Lower leg skin (tissue), 4 donors: ENCODE measurements at regions of chr18 and their contacts with region 1.

Region 1: DNA sequence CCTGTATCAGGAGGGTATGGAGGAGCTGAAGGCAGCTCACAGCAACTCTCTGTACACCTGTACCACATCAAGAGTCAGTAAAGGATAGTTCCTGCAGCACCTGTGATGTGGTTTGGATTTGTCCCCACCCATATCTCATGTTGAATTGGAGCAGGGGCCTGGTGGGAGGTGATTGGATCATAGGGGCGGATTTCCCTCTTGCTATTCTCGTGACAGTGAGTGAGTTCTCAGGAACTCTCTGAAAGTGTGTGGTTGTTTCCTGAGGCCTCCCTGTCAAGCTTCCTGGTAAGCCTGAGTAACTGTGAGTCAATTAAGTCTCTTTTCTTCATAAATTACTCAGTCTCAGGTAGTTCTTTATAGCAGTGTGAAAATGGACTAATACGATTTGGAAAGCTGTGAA is 28.9 kb downstream of the OSBPL1A start:
- DNase-seq: no peak
- H3K4me3 ChIP-seq: no peak overlapping the region
- CTCF ChIP-seq: no peak
- POLR2A ChIP-seq: no peak

Region 2: DNA sequence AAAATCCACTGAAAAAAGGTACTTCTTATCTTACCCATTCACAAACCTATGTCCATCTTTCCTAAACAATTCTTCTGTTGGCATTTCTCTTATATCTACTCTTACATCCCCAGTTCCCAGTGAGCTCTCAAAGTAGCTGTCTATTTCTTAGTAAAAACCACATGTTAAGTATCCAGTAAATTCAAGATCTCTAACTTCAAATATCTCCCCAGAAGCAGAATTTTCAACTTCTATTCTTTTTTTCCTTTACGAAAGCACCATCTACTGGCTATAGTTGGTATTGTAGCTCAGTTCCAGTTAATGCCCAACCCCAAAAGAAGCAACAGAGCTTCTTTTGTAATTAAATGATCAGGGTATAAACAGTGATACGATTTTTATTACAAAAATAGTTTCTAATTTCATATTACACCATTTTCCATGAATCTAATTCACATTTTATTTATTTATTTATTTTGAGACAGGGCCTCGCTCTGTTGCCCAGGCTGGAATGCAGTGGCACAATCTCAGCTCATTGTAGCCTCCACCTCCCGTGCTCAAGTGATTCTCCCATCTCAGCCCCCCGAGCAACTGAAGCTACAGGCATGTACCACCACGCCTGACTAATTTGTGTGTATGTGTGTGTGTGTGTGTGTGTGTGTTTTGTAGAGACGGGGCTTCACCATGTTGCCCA is 120.2 kb after region 1 on chr18:
- intact Hi-C with region 1: loop called (anchors 10 kb)
- DNase-seq: no peak
- H3K4me3 ChIP-seq: no peak overlapping the region
- CTCF ChIP-seq: no peak
- POLR2A ChIP-seq: no peak